ENCODE measurements at regions of chr11 and their contacts with region 1.

Region 1: DNA sequence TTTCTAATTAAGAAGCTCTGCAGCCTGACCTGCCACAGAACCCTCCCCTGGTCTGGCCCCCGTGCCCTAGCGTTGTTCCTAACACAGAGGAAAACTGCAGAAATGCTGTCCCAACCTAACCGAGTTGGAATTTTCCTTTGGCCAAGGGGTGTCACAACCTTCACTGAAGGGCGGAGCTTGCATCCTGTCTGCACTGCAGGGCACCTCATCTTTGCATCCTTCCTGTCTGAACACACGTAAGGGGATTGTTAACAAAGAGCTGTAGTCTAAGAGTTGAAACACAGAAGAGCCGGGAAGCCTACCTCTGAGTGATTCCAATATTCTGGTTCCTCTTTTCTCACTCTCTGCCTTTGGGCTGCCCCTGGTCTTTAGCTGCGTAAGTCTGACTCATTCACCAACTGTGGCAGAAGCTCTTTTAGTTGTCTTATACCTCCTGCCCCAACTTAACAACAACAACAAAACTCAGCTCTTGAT is 1.6 kb downstream of the DIXDC1 start:
- DNase-seq: peak in 1 of 10 donors; percentile 75
- H3K4me3 ChIP-seq: peak overlapping the region in 54 of 59 donors; percentile 7 to 86 (median 70)
- H3K27ac ChIP-seq: peak overlapping the region; percentile 51 to 96 (median 92)
- H3K27me3 ChIP-seq: no peaks in the 10 kb centered on the region
- CTCF ChIP-seq: peak in 1 of 56 donors; percentile 7

Region 2: DNA sequence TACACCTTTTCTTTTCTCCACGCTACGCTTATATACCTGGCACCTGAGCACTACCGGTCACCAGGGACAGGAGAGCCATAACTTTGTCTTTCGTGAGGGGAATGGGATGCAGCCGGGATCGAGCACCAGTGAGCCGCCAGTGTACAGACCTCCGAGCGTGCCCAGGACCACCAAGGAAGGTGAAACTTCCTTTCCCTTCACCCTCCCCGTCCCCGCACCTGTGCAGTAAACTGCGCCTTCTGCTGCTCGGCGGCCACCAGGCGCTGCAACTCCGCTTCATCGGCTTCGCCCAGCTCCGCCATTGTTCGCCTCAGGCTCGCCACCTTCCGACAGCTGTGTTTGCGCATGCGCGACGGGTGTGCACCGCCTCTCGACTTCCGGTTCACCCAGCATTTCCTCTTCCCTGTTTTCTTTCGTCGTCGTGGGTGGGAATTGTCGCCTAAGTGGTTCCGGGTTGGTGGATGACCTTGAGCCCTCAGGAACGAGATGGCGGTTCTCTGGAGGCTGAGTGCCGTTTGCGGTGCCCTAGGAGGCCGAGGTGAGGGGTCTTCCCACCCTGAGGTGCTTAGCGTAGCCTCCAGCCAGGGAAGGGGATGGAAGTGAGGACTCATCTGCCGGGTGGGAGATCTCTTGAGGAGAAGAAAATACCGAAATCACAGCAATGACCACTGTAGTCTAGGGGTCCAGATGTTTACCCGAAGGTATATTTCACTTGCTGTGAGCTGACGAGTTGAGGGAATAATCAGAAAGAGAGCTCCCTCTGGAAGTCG is 147.9 kb after region 1 on chr11 and contains the starts of genes SDHD and TIMM8B:
- intact Hi-C with region 1: loop called in 1 of 2 experiments (anchors 2 kb)
- DNase-seq: peak; percentile 88 to 97 (median 95)
- H3K4me3 ChIP-seq: peak within 1 kb of the TSS; percentile 68 to 100 (median 94)
- H3K27ac ChIP-seq: peak within 1 kb of the TSS in 55 of 59 donors; percentile 14 to 94 (median 76)
- H3K27me3 ChIP-seq: no peaks in the 10 kb centered on the region
- CTCF ChIP-seq: peak in 52 of 56 donors; percentile 25 to 73 (median 56)
- total RNA-seq, gene SDHD: 43.8 to 85.0 (median 65.3) TPM
- total RNA-seq, gene TIMM8B: 25.1 to 51.5 (median 35.6) TPM